ENCODE measurements at regions of chr18 and their contacts with region 1.

Region 1: GRCh38 chr18:51884039-51884438 is 456.0 kb upstream of the DCC start:
- DNase-seq: no peak
- ATAC-seq: no peak
- H3K4me3 ChIP-seq: no peak overlapping the region
- H3K27ac ChIP-seq: no peak overlapping the region
- H3K4me1 ChIP-seq: no peaks in the 10 kb centered on the region
- H3K27me3 ChIP-seq: no peaks in the 10 kb centered on the region
- CTCF ChIP-seq: no peak
- POLR2A ChIP-seq: no peak

Region 2: GRCh38 chr18:51824746-51825145 is 59.3 kb before region 1 on chr18:
- intact Hi-C with region 1: loop called in 1 of 10 experiments (anchors 10 kb)
- DNase-seq: no peak
- ATAC-seq: no peak
- H3K4me3 ChIP-seq: no peak overlapping the region
- H3K27ac ChIP-seq: no peak overlapping the region
- H3K4me1 ChIP-seq: no peaks in the 10 kb centered on the region
- H3K27me3 ChIP-seq: no peaks in the 10 kb centered on the region
- CTCF ChIP-seq: no peak
- POLR2A ChIP-seq: no peak